Colonic mucosa (tissue), 4 donors: ENCODE measurements at regions of chr9 and their contacts with region 1.

Region 1: DNA sequence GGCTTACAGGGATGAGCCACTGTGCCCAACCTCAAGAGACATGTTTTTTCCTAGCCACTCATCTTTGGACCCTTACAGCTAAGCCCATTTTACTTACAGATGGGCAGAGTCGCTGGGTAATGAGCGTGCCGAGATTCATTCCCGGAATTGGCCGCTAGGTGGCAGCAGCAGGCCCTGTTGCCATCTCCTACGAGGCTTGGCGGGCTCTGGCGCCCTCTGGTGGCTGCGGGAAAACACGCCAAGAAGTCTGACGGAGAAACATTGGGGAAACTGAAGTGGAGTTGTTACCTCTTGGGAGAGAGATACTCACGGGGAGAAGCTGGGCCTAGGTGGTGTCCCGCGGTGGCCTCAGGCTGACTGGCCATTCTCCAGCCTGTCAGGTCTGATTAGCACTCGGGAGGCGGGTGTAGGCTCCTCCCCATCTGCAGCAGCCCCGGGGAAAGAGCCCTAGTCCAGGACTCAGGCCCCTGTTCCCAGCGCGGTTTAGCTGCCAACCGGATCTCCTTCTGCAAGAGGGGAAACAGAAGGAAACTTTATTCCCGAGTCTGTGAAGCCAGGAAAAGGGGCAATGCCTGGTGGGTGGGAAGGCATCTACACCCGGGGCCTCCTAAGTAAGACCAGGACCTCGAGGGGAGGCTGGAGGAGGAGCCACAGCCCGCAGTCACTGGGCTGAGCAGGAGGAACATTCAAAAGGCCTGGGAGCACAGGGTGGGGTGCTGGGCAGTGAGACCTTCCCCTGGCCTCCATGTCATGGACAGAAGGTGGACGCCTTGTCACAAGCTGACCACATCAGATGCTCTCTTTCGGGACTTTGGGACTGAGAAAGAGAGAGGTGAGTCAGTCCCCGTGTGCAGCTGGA is 9.7 kb downstream of the PTGES2 start:
- DNase-seq: peak; percentile 98
- H3K4me3 ChIP-seq: no peak overlapping the region
- H3K27ac ChIP-seq: peak overlapping the region; percentile 94
- H3K4me1 ChIP-seq: peaks cover 20% of the 10 kb centered on the region
- H3K27me3 ChIP-seq: no peaks in the 10 kb centered on the region
- CTCF ChIP-seq: peak; percentile 100

Region 2: GRCh38 chr9:127950513-127951289 is 167.1 kb before region 1 on chr9:
- intact Hi-C with region 1: loop called (anchors 5 kb)
- DNase-seq: no peak
- H3K4me3 ChIP-seq: no peak overlapping the region
- H3K27ac ChIP-seq: no peak overlapping the region
- H3K4me1 ChIP-seq: peaks cover 19% of the 10 kb centered on the region
- H3K27me3 ChIP-seq: no peaks in the 10 kb centered on the region
- CTCF ChIP-seq: no peak

Region 3: GRCh38 chr9:128048663-128049062 is 69.2 kb before region 1 on chr9:
- intact Hi-C with region 1: loop called (anchors 5 kb)
- DNase-seq: no peak
- H3K4me3 ChIP-seq: no peak overlapping the region
- H3K27ac ChIP-seq: no peak overlapping the region
- H3K4me1 ChIP-seq: no peaks in the 10 kb centered on the region
- H3K27me3 ChIP-seq: no peaks in the 10 kb centered on the region
- CTCF ChIP-seq: no peak

Region 4: GRCh38 chr9:128203024-128203706 is 85.3 kb after region 1 on chr9 and contains the start of gene DNM1:
- intact Hi-C with region 1: no loop called
- DNase-seq: peak; percentile 49
- H3K4me3 ChIP-seq: peak within 1 kb of the TSS; percentile 59
- H3K27ac ChIP-seq: no peak within 1 kb of the TSS
- H3K4me1 ChIP-seq: peaks cover 7% of the 10 kb centered on the region
- H3K27me3 ChIP-seq: peaks cover 12% of the 10 kb centered on the region
- CTCF ChIP-seq: peak; percentile 61
- total RNA-seq, gene DNM1: 2.5 to 6.8 TPM

Region 5: DNA sequence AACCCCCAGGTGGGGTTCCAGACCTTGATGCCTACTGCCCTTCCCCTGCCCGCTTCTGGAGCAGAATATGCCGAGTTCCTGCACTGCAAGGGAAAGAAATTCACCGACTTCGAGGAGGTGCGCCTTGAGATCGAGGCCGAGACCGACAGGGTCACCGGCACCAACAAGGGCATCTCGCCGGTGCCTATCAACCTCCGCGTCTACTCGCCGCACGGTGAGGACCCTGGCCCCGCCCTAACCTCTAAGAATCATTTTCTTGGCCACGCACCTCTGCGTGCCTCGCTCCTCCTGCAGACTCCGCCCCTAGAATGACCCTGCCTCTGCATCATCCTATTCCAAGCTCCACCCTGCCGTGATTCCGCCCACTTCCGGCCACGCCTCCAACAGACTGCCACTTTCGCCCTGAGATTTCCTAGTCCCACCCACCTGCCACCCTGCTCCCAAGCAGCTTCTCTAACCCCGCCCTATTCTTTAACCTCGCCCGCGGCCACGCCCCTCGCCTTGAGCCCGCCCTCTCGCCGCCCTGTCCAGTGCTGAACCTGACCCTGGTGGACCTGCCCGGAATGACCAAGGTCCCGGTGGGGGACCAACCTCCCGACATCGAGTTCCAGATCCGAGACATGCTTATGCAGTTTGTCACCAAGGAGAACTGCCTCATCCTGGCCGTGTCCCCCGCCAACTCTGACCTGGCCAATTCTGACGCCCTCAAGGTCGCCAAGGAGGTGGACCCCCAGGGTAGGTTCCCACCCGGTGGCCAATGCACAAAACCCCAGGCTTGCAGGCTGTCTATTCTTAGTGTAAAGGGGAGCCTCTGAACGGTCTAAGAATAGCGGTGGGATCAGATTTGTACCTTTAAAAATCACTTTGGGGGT is 100.9 kb after region 1 on chr9:
- intact Hi-C with region 1: no loop called
- DNase-seq: peak; percentile 99
- H3K4me3 ChIP-seq: peak overlapping the region; percentile 32
- H3K27ac ChIP-seq: no peak overlapping the region
- H3K4me1 ChIP-seq: peaks cover 5% of the 10 kb centered on the region
- H3K27me3 ChIP-seq: no peaks in the 10 kb centered on the region
- CTCF ChIP-seq: no peak